ENCODE measurements at regions of chr12 and their contacts with region 1.

Region 1: DNA sequence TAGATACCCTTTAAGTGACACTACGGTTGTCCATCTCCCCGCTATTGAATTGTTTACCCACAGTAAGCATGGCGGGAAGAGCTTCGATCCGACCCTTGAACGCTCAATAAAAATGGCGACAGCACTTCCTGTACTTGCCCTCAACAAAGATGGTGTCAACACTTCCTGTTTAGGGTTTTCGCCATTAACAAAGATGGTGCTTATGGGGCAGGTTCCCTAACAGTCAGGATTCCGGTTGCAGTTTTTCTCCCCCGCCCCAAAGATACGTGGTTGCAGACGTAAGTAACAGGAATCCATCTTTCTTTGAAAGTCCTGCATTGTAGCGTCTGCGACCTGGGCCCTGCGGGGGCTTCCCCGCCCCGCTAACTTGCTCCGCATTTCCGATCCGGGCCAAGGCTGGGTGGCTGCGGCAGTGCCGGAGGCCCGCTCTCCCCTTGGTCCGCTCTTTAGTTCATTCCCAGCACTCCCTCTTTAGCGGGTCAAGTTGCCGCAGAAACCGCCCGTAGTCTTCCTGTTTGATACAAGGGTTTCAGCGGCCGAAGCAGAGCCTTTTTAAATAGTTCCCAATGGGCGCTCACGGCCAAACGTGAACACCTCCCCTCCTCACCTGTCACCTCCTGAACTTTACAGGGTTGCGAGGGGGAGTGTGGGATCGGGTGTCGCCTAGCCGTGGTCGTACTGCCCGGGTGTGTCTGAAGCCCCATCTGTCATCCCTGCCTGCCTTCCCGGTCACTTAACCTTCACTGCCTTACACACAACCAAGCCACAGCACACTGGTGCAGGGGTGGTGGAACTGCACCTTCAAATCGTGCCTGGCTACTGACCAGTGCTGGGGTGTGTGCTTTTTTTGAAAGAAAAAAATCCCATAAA is at the start of gene CRADD:
- DNase-seq: peak; percentile 97
- H3K4me3 Mint-ChIP-seq: peak within 1 kb of the TSS; percentile 98
- H3K27ac Mint-ChIP-seq: peak within 1 kb of the TSS; percentile 100
- H3K4me1 Mint-ChIP-seq: peaks cover 21% of the 10 kb centered on the region
- H3K27me3 Mint-ChIP-seq: no peaks in the 10 kb centered on the region
- CTCF ChIP-seq: no peak
- total RNA-seq, gene CRADD: 15.4 and 17.1 TPM in 2 replicates

Region 2: DNA sequence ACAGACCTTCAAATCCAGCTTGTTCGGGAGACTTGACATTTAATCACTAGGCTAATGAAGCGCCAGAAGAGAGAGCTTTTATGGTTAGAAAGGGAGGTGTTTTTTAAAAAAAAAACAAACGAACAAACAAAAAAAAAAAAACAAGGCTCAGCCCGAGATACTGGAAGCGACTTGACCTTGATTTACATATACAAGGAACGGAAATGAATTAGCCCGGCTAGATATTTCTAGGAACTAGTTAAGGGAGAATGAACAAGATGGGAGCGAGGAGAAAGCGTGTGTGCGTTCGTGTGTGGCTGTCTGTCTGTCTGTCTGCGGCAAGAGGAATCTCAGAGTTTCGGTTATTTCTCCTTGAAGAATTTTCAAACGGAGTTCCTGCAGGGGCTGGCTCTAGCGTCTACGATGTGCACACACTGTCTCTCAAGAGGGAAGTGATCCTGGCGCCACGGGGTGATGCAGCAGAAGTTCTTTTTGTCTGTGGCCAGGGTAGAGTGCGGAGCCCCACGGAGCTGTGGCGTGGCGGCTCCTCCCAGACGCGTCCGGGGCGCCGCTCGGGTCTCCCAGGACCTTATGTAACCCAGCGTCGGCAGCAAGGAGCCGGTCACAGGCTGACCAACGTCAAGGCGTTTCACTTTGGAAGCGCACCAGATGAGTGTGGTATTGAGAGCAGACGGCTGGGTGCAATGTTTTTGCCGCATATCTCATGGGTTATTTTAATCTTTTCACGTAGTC is 86.1 kb before region 1 on chr12:
- CTCF ChIA-PET with region 1: no interaction called
- POLR2A ChIA-PET with region 1: interaction called, 15 read pairs
- intact Hi-C with region 1: loop called (anchors 5 kb)
- DNase-seq: peak; percentile 78
- H3K4me3 Mint-ChIP-seq: peak overlapping the region; percentile 95
- H3K27ac Mint-ChIP-seq: peak overlapping the region; percentile 93
- H3K4me1 Mint-ChIP-seq: peaks cover 4% of the 10 kb centered on the region
- H3K27me3 Mint-ChIP-seq: no peaks in the 10 kb centered on the region
- CTCF ChIP-seq: no peak

Region 3: DNA sequence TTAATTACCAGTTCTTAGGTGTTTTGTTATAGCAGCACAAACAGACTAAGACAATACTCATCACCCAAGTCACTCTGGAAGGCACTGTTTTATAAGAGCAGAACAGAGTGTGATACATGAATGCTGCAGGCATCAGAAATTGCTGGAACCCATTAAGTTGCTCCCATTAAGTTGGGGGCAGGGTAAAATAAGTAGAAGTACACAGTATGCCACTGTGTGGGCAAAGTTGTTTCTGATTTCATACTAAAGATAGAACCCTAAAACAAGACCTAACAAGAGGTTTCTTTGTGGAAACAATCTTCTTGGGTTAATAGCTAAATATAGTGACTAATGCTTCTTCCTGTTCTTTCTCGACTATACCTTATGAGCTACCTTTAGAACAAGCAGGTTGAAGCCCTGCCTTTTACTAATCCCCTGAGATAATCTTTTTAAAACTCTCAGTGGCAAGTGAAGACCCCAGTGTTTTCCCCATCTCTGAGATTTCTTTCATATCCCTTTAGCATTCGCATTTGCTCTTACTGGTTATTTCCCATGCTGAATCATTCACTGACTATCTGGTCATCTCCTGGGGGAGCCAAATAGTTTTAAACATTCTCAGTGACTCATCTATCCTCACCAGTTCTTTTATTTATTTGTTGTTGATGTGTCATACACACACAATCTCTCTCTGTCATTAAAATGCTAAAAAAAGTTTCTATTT is 52.7 kb before region 1 on chr12:
- CTCF ChIA-PET with region 1: no interaction called
- POLR2A ChIA-PET with region 1: interaction called, 13 read pairs
- intact Hi-C with region 1: loop called (anchors 1 kb)
- DNase-seq: peak; percentile 93
- H3K4me3 Mint-ChIP-seq: peak overlapping the region; percentile 4
- H3K27ac Mint-ChIP-seq: peak overlapping the region; percentile 85
- H3K4me1 Mint-ChIP-seq: peaks cover 18% of the 10 kb centered on the region
- H3K27me3 Mint-ChIP-seq: no peaks in the 10 kb centered on the region
- CTCF ChIP-seq: no peak